ENCODE measurements at regions of chr9 and their contacts with region 1.

Region 1: GRCh38 chr9:91978739-91979414 is 28.8 kb upstream of the ROR2 start:
- H3K4me3 ChIP-seq: no peak overlapping the region
- H3K27ac ChIP-seq: no peak overlapping the region
- H3K4me1 ChIP-seq: no peaks in the 10 kb centered on the region
- CTCF ChIP-seq: no peak; the same call in 1 of the 2 replicates

Region 2: GRCh38 chr9:91775011-91775707 is 203.7 kb before region 1 on chr9:
- CTCF ChIA-PET with region 1: interaction called, 27 read pairs
- POLR2A ChIA-PET with region 1: no interaction called
- H3K4me3 ChIP-seq: no peak overlapping the region
- H3K27ac ChIP-seq: no peak overlapping the region
- H3K4me1 ChIP-seq: no peaks in the 10 kb centered on the region
- CTCF ChIP-seq: peak; percentile 77

Region 3: GRCh38 chr9:92393686-92394085 is 414.8 kb after region 1 on chr9:
- CTCF ChIA-PET with region 1: no interaction called
- POLR2A ChIA-PET with region 1: no interaction called
- H3K4me3 ChIP-seq: no peak overlapping the region
- H3K27ac ChIP-seq: no peak overlapping the region
- H3K4me1 ChIP-seq: no peaks in the 10 kb centered on the region
- CTCF ChIP-seq: no peak